Aorta (tissue), 5 donors: ENCODE measurements at regions of chr1 and their contacts with region 1.

Region 1: GRCh38 chr1:110338886-110339406 is at the start of gene RBM15:
- DNase-seq: peak; percentile 97 to 99
- ATAC-seq: peak; percentile 95
- H3K4me3 ChIP-seq: peak within 1 kb of the TSS; percentile 78 to 95
- H3K27ac ChIP-seq: peak within 1 kb of the TSS; percentile 62 to 72
- H3K4me1 ChIP-seq: peaks cover 0 to 3% of the 10 kb centered on the region in 2 donors
- H3K27me3 ChIP-seq: no peaks in the 10 kb centered on the region
- total RNA-seq, gene RBM15: 18.7 to 22.5 TPM

Region 2: DNA sequence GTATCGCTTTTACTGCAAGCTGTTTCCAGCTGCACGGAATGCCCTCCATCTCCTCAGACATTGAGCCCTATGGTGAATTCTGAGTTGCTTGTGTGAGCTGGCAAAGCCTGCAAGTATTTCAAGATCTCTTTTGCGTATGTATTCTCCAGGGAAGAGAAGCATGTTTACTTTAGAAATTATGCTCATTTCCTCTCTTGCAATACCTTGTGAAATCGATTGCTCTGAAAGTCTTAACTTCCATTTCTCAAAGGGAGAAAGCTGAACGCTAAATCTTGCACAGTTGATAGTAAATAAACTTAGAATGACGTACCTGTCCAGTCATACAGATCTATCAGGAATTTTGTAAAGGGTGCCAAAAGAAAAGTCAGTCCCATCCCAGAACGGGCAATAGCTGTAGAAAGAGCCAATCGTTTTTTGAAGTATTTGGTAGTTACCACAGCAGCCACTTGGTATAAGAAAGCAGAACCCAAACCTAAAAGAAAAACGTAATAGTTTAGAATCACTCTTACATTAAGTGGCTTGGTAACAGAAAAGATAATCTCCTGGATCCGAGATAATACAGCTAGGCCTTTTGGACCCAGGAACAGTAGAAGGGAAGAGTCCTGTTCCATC is 41.8 kb after region 1 on chr1:
- intact Hi-C with region 1: no loop called
- DNase-seq: no peak
- ATAC-seq: no peak
- H3K4me3 ChIP-seq: no peak overlapping the region
- H3K27ac ChIP-seq: no peak overlapping the region
- H3K4me1 ChIP-seq: peaks cover 0 to 1% of the 10 kb centered on the region in 2 donors
- H3K27me3 ChIP-seq: no peaks in the 10 kb centered on the region

Region 3: GRCh38 chr1:110407260-110408210 is 68.6 kb after region 1 on chr1 and contains the start of gene LAMTOR5:
- intact Hi-C with region 1: loop called (anchors 2 to 5 kb)
- DNase-seq: peak; percentile 96 to 98
- ATAC-seq: peak; percentile 97
- H3K4me3 ChIP-seq: peak within 1 kb of the TSS; percentile 81 to 82
- H3K27ac ChIP-seq: peak within 1 kb of the TSS; percentile 47 to 81
- H3K4me1 ChIP-seq: no peaks in the 10 kb centered on the region
- H3K27me3 ChIP-seq: no peaks in the 10 kb centered on the region
- total RNA-seq, gene LAMTOR5: 73.6 to 77.6 TPM